Mammary epithelial cell (primary cell): ENCODE measurements at regions of chr9 and their contacts with region 1.

Region 1: GRCh38 chr9:137046098-137046787 is at the start of gene NPDC1:
- DNase-seq: peak; percentile 73
- H3K4me3 ChIP-seq: peak within 1 kb of the TSS; percentile 52 to 62 (median 59)
- H3K27ac ChIP-seq: no peak within 1 kb of the TSS
- H3K4me1 ChIP-seq: peaks cover 27% of the 10 kb centered on the region
- H3K27me3 ChIP-seq: no peaks in the 10 kb centered on the region
- CTCF ChIP-seq: peak; percentile 82 to 90
- total RNA-seq, gene NPDC1: 15.5 to 86.8 TPM

Region 2: DNA sequence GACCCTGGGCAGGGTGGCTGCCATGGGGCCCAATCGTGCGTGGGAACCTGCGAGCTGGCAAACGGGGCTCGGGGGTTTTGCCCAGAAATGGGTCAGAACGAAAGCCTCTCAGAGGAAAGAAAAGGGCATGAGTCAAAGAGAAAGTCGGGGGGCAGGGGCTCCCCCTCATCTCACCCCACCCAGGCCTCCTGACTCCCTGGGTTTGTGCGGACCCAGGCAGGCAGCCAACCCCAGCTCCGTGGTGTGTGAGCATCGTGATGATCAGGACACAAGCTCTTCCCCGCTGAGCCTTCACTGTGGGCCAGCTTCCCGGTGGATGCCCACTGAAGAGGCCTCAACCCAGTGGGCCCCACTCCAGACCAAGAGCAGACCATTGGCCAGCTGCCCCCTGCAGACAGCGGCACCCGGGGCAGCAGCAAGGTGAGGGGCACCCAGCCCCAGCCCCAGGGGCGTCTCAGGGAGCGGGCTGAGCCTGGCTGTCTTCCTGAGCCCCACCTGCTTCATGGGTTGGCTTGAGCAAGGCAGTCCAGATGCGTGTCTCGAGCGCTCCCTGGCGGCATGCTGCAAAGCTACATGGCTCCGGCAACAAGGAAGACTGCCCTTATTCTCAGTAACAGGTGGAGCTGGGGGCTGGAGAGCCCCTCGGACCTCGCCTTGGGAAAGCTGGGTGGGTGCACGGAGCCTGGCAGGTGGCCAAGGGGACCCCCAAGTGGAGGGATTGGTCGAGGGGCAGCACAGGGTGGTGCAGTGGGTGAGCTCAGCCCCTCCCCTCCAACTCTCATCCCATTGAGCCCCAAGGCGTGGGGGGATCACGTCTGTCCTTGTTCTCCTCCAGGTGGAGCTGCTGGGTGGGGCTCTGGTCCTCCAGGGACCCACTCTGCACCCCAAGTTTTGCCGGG is 11.1 kb before region 1 on chr9:
- CTCF ChIA-PET with region 1: no interaction called
- dilution Hi-C with region 1: no loop called
- in situ Hi-C with region 1: no loop called
- intact Hi-C with region 1: loop called (anchors 1 kb)
- DNase-seq: peak; percentile 68
- H3K4me3 ChIP-seq: no peak overlapping the region
- H3K27ac ChIP-seq: no peak overlapping the region
- H3K4me1 ChIP-seq: peaks cover 17% of the 10 kb centered on the region
- H3K27me3 ChIP-seq: no peaks in the 10 kb centered on the region
- CTCF ChIP-seq: peak; percentile 82 to 94

Region 3: GRCh38 chr9:137070201-137070905 is 24.1 kb after region 1 on chr9 and contains the start of gene SAPCD2:
- CTCF ChIA-PET with region 1: interaction called, 13 read pairs
- dilution Hi-C with region 1: no loop called
- in situ Hi-C with region 1: no loop called
- intact Hi-C with region 1: loop called (anchors 1 kb)
- DNase-seq: peak; percentile 85
- H3K4me3 ChIP-seq: peak within 1 kb of the TSS; percentile 22 to 52 (median 47)
- H3K27ac ChIP-seq: no peak within 1 kb of the TSS
- H3K4me1 ChIP-seq: peaks cover 21% of the 10 kb centered on the region
- H3K27me3 ChIP-seq: no peaks in the 10 kb centered on the region
- CTCF ChIP-seq: no peak
- total RNA-seq, gene SAPCD2: 1.0 to 6.9 TPM

Region 4: DNA sequence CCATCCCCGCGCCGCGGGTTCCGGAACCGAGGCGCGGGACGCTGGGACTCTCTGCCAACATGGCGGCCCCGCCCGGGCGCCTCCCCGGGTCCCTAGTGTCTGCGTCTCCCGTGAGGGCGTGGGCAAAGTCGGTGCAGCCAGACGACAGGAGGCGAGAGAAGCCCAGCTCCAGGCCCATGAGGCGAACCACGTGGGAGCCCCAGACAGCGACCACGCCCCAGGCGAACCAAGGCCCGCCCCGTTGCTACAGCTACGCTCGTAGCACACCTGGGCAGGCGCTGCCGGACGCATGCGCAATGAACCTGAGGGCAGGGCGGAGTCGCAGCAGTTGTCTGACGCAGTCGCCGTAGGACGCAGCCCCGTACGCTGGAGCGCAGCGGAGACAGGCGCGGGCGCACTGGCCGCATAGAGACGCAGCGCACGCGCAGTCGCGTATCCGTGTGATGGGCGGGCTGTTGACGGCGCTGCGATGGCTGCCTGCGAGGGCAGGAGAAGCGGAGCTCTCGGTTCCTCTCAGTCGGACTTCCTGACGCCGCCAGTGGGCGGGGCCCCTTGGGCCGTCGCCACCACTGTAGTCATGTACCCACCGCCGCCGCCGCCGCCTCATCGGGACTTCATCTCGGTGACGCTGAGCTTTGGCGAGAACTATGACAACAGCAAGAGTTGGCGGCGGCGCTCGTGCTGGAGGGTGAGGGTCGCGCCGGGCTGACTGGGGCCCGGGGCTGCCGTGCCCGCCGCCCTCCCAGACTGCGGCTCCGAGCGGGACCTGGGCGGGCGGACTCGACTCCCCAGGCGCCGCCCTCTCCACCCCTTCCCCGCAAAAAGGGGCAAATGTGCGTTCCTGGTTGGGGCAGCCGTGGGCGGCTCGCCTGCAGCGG is 40.5 kb after region 1 on chr9 and contains the start of gene MAN1B1:
- CTCF ChIA-PET with region 1: no interaction called
- dilution Hi-C with region 1: no loop called
- in situ Hi-C with region 1: no loop called
- intact Hi-C with region 1: loop called (anchors 1 kb)
- DNase-seq: peak; percentile 100
- H3K4me3 ChIP-seq: peak within 1 kb of the TSS; percentile 83 to 85 (median 85)
- H3K27ac ChIP-seq: peak within 1 kb of the TSS; percentile 83
- H3K4me1 ChIP-seq: peaks cover 46% of the 10 kb centered on the region
- H3K27me3 ChIP-seq: no peaks in the 10 kb centered on the region
- CTCF ChIP-seq: no peak
- total RNA-seq, gene MAN1B1: 62.3 to 67.0 TPM

Region 5: DNA sequence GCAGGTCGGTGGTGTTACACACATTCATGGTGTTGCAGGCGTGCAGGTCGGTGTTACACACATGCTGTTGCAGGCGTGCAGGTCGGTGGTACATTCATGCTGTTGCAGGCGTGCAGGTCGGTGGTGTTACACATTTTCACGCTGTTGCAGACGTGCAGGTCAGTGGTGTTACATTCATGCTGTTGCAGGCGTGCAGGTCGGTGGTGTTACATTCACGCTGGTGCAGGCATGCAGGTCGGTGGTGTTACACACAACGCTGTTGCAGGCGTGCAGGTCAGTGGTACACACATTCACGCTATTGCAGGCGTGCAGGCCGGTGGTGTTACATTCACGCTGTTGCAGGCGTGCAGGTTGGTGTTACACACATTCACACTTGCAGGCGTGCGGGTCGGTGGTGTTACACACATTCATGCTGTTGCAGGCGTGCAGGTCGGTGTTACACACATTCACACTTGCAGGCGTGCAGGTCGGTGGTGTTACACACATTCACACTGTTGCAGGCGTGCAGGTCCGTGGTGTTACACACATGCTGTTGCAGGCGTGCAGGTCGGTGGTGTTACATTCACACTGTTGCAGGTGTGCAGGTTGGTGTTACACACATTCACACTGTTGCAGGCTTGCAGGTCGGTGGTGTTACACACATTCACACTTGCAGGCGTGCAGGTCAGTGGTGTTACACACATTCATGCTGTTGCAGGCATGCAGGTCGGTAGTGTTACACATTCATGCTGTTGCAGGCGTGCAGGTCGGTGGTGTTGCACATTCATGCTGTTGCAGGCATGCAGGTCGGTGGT is 57.2 kb after region 1 on chr9:
- CTCF ChIA-PET with region 1: no interaction called
- dilution Hi-C with region 1: loop called (anchors 5 kb)
- in situ Hi-C with region 1: no loop called
- intact Hi-C with region 1: no loop called
- DNase-seq: no peak
- H3K4me3 ChIP-seq: no peak overlapping the region
- H3K27ac ChIP-seq: no peak overlapping the region
- H3K4me1 ChIP-seq: no peaks in the 10 kb centered on the region
- H3K27me3 ChIP-seq: no peaks in the 10 kb centered on the region
- CTCF ChIP-seq: no peak

Region 6: DNA sequence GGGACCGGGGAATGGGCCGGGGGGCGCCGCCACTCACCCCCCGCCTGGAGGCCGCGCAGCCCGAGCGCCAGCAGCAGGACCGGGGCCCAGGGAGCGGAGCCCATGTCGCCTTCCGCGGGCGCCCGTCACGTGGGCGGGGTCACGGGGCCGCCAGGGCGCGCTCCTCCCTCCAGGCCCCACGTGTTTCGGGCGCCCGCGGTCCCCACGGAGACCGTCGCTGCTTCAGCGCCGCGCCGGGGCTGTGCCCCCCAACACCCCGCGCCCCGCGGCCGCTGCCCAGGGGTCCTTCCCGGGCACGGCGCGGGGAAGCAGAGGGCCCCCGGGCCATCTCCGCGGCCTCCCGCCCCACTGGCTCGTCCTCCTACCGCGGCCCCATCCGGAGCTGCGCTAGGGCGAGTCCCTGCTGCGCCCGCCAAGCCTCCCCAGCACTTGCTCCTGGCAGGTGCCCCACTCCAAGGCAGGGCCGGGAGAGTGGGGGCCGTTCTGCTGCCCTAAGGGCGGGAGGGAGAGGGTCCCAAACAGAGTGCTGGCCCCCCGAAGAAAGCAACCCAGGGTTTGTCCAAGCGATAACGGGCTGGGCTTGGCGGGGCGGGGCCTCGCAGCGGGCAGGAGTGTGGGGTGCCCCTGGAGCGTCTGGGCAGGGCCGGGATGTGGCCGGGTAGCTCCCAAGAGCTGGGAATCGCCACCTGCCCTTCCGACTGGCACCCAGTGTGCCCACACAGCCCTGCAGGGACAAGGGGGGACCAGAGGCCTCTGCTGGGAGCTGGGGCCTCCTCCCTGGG is 68.6 kb after region 1 on chr9 and contains the start of gene DPP7:
- CTCF ChIA-PET with region 1: no interaction called
- dilution Hi-C with region 1: no loop called
- in situ Hi-C with region 1: no loop called
- intact Hi-C with region 1: loop called (anchors 1 kb)
- DNase-seq: peak; percentile 30
- H3K4me3 ChIP-seq: peak within 1 kb of the TSS; percentile 56 to 68 (median 58)
- H3K27ac ChIP-seq: no peak within 1 kb of the TSS
- H3K4me1 ChIP-seq: peaks cover 5% of the 10 kb centered on the region
- H3K27me3 ChIP-seq: no peaks in the 10 kb centered on the region
- CTCF ChIP-seq: no peak
- total RNA-seq, gene DPP7: 52.3 to 80.7 TPM